ENCODE measurements at regions of chr14 and their contacts with region 1.

Region 1: DNA sequence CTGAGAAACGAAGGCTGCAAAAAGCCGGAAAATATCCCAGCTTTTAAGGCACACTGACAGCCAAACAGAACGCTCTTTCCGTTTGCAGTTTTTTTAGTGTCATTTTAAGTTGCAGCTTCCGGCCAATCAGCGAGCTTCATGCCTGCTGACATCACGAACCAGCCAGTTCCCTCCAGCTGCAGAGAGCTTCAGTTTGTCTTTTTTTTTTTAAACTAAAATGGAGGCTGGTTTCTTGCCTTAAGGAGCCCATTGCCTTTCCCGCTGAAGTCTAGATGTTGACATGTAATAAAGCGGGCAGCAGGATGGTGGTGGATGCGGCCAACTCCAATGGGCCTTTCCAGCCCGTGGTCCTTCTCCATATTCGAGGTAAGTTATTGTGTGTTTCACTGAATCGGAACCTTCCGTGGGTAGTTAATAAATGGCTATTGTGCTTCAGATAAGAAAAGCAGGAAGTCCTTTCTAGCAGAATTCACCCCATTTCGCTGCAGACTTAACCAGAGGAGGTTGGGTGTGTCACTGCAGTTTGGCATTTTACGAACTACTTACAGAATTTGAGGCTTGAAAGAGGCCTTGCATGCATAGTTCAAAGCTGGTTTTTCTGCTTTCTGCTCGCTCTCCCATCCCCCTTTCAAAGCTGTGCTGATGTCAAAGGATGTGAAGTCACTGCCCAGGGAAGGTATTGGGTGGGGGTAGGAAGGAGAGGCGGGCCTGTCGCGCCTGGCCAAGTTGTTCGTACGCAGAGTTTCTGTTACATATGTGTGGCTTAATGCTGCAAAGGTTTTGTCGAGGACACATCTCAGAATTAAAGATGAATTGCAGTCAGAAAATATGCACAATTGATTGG is 48.4 kb downstream of the PPP2R5C start:
- DNase-seq: peak; percentile 67 to 97 (median 83)
- ATAC-seq: peak; percentile 86
- H3K4me3 ChIP-seq: peak overlapping the region; percentile 78 to 80
- H3K4me3 Mint-ChIP-seq: peak overlapping the region; percentile 94
- H3K27ac ChIP-seq: peak overlapping the region; percentile 97 to 99
- H3K27ac Mint-ChIP-seq: peak overlapping the region; percentile 99
- H3K4me1 ChIP-seq: peaks cover 42% of the 10 kb centered on the region
- H3K4me1 Mint-ChIP-seq: peaks cover 52% of the 10 kb centered on the region
- H3K27me3 ChIP-seq: no peaks in the 10 kb centered on the region
- H3K27me3 Mint-ChIP-seq: no peaks in the 10 kb centered on the region
- CTCF ChIP-seq: no peak

Region 2: DNA sequence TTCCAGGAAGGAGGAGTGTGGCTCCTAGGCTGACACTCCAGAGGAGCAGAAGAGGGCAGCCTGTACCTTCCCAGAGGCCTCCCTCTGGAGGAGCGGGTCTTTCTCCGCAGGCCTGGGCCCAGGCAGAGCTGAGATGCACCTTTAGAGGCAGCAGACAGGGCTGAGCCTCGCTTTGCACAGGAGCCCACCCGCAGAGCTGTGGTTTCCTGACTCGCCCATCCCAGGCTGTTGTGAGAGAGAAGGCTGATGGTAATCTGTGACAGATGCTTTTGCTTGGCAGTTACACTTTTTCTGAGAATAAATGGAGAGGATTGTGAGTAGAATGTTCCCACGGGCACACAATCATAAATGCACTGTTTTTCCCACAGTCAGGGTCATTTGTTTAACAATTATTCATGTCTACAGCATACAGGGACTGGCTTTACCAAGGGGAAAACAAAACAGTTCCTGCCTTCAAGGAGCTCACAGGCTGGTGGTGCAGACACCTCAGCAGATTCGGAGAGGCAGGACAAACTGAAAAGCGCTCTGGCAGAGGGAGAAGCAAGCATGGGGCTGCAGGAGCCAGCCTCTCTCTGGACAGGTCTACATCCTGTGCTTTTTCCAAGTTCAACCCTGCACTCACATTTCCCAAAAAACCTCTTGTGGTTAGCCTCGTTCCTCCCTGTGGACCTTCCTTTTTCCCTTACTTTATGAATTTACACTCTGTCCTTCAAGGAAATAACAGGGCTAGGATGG is 1730.7 kb before region 1 on chr14:
- CTCF ChIA-PET with region 1: no interaction called
- POLR2A ChIA-PET with region 1: no interaction called
- intact Hi-C with region 1: loop called in 1 of 2 experiments (anchors 10 kb)
- DNase-seq: peak; percentile 74 to 95 (median 88)
- ATAC-seq: peak; percentile 66
- H3K4me3 ChIP-seq: peak overlapping the region; percentile 27
- H3K4me3 Mint-ChIP-seq: peak overlapping the region; percentile 77
- H3K27ac ChIP-seq: peak overlapping the region; percentile 55 to 63
- H3K27ac Mint-ChIP-seq: peak overlapping the region; percentile 99
- H3K4me1 ChIP-seq: peaks cover 95% of the 10 kb centered on the region
- H3K4me1 Mint-ChIP-seq: peaks cover 97% of the 10 kb centered on the region
- H3K27me3 ChIP-seq: no peaks in the 10 kb centered on the region
- H3K27me3 Mint-ChIP-seq: no peaks in the 10 kb centered on the region
- CTCF ChIP-seq: no peak

Region 3: DNA sequence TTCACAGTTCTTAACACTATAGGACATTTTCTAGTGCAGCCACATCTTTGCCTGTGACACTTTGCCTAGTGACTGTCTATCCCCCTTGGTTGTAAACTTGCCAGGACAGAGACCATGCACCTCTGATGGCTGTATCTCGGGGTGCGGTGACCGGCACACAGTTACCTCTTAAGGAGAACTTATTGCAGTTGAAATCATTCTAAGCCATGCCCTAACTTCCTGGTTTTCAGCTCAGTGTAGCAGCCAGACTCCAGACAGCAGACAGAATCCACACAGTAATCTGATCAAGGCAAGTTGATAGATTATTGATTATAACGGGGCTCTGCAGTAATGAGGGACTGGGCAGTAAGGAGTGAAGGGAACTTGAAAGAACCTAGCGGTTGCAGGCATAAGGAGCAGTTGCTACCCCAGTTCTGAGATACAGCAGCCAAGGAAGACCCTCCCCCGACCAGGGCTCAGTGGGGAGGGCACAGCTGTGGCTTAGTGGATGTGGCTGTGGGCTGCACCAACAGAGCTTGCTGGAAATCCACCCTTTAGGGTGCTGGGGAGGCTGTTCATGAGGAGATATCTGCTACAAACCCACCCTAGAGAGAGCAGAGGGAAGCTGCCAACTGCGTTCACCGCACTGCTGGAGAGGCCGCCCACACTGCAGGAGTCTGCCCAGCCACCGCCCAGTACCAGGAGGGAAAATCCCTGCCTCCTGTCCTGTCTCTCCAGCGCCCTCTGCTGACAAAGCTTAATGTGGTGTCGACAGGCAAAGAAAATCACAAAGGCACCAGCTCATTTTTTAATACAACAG is 1164.5 kb before region 1 on chr14:
- CTCF ChIA-PET with region 1: no interaction called
- POLR2A ChIA-PET with region 1: no interaction called
- intact Hi-C with region 1: no loop called
- DNase-seq: peak; percentile 65 to 91 (median 89)
- ATAC-seq: peak; percentile 88
- H3K4me3 ChIP-seq: no peak overlapping the region
- H3K4me3 Mint-ChIP-seq: no peak overlapping the region
- H3K27ac ChIP-seq: no peak overlapping the region
- H3K27ac Mint-ChIP-seq: peak overlapping the region; percentile 14
- H3K4me1 ChIP-seq: peaks cover 46% of the 10 kb centered on the region
- H3K4me1 Mint-ChIP-seq: peaks cover 46% of the 10 kb centered on the region
- H3K27me3 ChIP-seq: no peaks in the 10 kb centered on the region
- H3K27me3 Mint-ChIP-seq: no peaks in the 10 kb centered on the region
- CTCF ChIP-seq: peak; percentile 72

Region 4: DNA sequence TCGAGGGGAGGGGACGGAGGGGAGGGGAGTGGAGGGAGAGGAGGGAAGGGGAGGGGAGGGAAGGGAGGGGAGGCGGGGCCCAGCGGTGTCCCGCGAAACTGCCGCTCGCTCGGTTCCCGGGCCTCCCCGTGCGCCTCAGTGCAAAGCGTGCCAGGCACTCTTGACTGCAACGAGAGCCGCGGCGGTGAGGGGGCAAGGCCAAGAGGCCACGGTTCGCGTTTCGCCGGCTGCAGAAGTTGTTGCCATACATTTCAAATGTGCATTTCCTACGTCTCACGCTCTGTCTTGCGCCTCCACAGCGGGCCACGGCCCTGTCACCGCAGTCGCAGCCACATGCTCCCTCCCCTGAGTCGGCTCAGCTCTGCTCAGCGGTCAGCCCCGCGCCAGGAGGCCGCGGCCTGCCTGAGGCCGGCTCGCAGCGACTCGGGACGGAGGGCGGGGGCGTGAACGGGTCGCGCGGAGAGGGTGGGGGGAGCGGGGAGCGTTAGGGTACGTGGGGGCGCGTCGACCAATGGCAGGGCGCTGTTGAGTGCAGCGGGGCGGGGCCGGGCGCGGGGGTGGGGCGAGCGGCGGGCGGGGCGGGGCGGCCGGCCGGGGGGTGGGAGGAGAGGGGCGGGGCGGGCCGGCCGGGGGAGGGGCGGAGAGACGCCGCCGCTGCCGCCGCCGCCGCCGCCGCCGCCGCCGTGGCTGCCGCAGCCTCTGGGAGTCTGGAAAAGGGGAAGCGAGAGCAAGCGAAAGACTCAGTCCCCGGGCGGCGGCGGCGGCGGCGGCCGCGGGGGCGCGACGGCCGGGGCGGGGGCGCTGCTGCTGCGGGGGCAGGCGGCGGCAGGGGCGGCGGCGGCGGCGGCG is 48.6 kb before region 1 on chr14 and contains the start of gene PPP2R5C:
- CTCF ChIA-PET with region 1: interaction called, 3 read pairs
- POLR2A ChIA-PET with region 1: interaction called, 10 read pairs
- intact Hi-C with region 1: loop called (anchors 1 kb)
- DNase-seq: peak; percentile 74 to 94 (median 87)
- ATAC-seq: peak; percentile 61
- H3K4me3 ChIP-seq: peak within 1 kb of the TSS; percentile 97 to 98
- H3K4me3 Mint-ChIP-seq: peak within 1 kb of the TSS; percentile 95
- H3K27ac ChIP-seq: peak within 1 kb of the TSS; percentile 90 to 93
- H3K27ac Mint-ChIP-seq: peak within 1 kb of the TSS; percentile 94
- H3K4me1 ChIP-seq: peaks cover 25% of the 10 kb centered on the region
- H3K4me1 Mint-ChIP-seq: peaks cover 41% of the 10 kb centered on the region
- H3K27me3 ChIP-seq: no peaks in the 10 kb centered on the region
- H3K27me3 Mint-ChIP-seq: no peaks in the 10 kb centered on the region
- CTCF ChIP-seq: no peak
- total RNA-seq, gene PPP2R5C: 557 to 560 TPM

Region 5: DNA sequence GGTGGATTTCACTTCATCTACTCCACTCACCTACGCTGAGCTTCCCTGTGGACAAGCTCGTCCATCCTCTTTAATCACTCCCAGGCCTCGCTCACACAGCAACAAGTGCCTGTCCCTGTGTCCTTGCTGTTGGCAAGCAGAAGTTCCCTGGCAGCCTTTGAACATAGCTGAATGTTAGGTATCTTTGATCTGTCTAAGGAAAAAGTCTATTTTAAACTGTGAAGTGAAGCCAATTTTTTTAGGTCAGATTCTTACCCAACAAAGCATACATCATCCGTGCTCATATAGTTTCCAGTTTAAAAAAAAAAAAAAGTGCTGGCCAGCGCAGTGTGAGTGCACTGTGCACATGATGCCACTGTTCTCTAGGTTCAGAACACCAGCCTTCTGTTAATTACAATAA is 12.0 kb before region 1 on chr14:
- CTCF ChIA-PET with region 1: interaction called, 5 read pairs
- POLR2A ChIA-PET with region 1: interaction called, 17 read pairs
- intact Hi-C with region 1: loop called (anchors 2 kb)
- DNase-seq: no peak
- ATAC-seq: no peak
- H3K4me3 ChIP-seq: no peak overlapping the region
- H3K4me3 Mint-ChIP-seq: no peak overlapping the region
- H3K27ac ChIP-seq: no peak overlapping the region
- H3K27ac Mint-ChIP-seq: no peak overlapping the region
- H3K4me1 ChIP-seq: peaks cover 1% of the 10 kb centered on the region
- H3K4me1 Mint-ChIP-seq: peaks cover 6% of the 10 kb centered on the region
- H3K27me3 ChIP-seq: no peaks in the 10 kb centered on the region
- H3K27me3 Mint-ChIP-seq: no peaks in the 10 kb centered on the region
- CTCF ChIP-seq: no peak

Region 6: DNA sequence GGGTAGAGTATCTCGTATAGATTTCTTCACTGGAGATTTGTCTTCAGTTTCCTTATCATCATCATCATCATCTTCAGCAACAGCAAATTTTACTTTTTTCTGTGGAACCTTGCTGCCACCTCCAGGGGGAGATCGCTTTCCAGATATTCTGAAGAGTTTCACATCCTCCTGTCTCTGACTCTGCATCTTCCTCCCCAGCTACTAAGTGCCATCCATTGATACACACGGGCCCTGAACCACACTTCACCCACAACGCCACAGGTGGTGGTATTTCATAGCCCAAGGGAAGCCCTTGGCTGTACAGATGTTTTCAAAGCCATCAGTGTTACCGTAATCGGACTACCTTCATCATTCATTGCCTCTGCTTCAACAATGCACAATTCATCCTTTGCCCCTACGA is 33.8 kb after region 1 on chr14:
- CTCF ChIA-PET with region 1: interaction called, 6 read pairs
- POLR2A ChIA-PET with region 1: interaction called, 7 read pairs
- intact Hi-C with region 1: loop called in 1 of 2 experiments (anchors 5 kb)
- DNase-seq: peak in 8 of 9 experiments; percentile 24 to 89 (median 62)
- ATAC-seq: peak; percentile 70
- H3K4me3 ChIP-seq: no peak overlapping the region
- H3K4me3 Mint-ChIP-seq: peak overlapping the region; percentile 52
- H3K27ac ChIP-seq: peak overlapping the region in 1 of 2 experiments; percentile 21
- H3K27ac Mint-ChIP-seq: peak overlapping the region; percentile 90
- H3K4me1 ChIP-seq: peaks cover 67% of the 10 kb centered on the region
- H3K4me1 Mint-ChIP-seq: peaks cover 89% of the 10 kb centered on the region
- H3K27me3 ChIP-seq: no peaks in the 10 kb centered on the region
- H3K27me3 Mint-ChIP-seq: no peaks in the 10 kb centered on the region
- CTCF ChIP-seq: peak; percentile 72

Region 7: DNA sequence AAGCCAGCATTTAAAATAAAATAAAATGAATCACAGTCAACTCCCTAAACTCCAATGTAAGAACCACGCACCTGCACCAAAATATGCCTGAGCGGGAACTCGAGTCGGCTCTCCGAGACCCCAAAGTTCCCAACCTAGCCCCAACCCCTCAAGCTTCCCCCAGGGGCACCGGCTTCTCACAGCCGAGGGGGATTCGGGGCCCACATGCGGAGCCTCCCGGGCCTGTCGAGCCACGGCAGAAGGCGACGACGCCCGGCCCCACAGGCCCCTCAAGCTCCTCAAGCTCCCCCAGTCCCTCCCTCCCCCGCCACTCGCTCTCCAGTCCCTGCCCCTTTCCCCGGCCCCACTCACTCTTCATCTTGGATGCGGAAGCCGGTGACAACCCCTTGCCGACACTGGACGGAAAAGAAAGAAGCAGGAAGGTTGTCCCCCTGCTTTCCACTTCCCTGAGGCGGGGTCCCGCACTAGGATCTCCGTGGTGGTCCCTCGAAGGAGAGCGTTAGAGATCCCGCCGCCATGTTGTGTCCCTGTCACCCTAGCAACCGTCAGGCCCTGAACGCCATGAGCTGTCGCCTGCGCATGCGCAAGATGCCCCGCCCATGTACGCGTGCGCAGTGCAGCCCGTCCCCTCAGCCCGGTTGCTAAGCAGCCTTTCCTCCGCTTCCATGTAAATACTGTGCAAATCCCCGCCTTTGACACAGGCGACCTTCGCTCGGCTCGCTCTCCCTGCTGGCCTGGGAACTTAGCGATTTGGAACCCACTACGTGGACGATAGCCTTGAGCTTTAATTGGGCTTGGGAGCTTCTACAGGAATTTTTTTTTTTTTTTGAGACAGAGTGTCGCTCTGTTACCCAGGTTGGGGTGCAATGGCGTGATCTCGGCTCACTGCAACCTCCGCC is 495.0 kb after region 1 on chr14 and contains the start of gene MOK:
- CTCF ChIA-PET with region 1: no interaction called
- POLR2A ChIA-PET with region 1: no interaction called
- intact Hi-C with region 1: loop called in 1 of 2 experiments (anchors 2 kb)
- DNase-seq: peak; percentile 94 to 99 (median 98)
- ATAC-seq: peak; percentile 92
- H3K4me3 ChIP-seq: peak within 1 kb of the TSS; percentile 83 to 97
- H3K4me3 Mint-ChIP-seq: peak within 1 kb of the TSS; percentile 91
- H3K27ac ChIP-seq: peak within 1 kb of the TSS; percentile 84 to 88
- H3K27ac Mint-ChIP-seq: peak within 1 kb of the TSS; percentile 94
- H3K4me1 ChIP-seq: peaks cover 5% of the 10 kb centered on the region
- H3K4me1 Mint-ChIP-seq: peaks cover 10% of the 10 kb centered on the region
- H3K27me3 ChIP-seq: no peaks in the 10 kb centered on the region
- H3K27me3 Mint-ChIP-seq: peaks cover 2% of the 10 kb centered on the region
- CTCF ChIP-seq: no peak
- total RNA-seq, gene MOK: 2.7 to 3.6 TPM